WTC11 (cell line): ENCODE measurements at regions of chr3 and their contacts with region 1.

Region 1: GRCh38 chr3:61936344-61936937 is 375.1 kb downstream of the PTPRG start:
- DNase-seq: peak; percentile 70
- ATAC-seq: peak; percentile 72
- H3K4me3 Mint-ChIP-seq: no peak overlapping the region
- H3K27ac Mint-ChIP-seq: no peak overlapping the region
- H3K4me1 Mint-ChIP-seq: peaks cover 68% of the 10 kb centered on the region
- H3K27me3 Mint-ChIP-seq: no peaks in the 10 kb centered on the region
- CTCF ChIP-seq: peak; percentile 84

Region 2: DNA sequence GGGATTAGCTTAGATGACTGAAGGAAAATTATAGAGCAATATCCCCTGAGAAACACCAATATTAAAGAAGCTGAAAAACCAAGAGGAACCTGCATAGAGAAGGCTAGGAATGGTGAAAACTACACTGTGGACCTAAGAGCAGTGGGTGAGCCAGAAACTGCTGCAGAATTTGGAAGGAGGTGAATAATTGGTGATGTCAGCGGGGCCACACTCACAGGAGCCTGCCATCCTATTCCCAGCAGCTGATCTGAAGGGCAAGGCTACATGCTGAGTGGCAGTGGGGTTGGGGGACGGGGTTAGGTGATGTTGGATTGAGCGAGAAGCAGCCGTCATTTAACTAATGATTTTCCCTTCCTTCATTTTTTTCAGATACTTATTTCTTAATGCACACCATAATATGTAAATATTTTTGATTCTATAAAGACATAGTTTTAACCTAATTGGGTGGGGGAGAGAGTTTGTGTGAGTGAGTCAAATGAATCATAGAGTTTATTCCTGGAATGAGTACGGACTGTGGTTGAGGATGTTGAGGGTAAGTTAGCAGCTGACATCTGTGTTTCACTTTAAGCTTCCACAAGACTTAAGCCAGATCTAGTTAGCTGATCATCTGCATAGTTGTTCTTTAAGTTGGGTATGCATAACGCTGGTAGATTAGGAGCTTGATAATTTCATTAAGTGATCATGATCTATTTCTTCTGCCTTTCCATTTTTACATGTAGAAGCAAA is 152.3 kb before region 1 on chr3:
- CTCF ChIA-PET with region 1: no interaction called
- POLR2A ChIA-PET with region 1: no interaction called
- DNase-seq: no peak
- ATAC-seq: peak; percentile 55; the same call in 1 of the 2 replicates
- H3K4me3 Mint-ChIP-seq: no peak overlapping the region
- H3K27ac Mint-ChIP-seq: peak overlapping the region; percentile 49; the same call in 1 of the 2 replicates
- H3K4me1 Mint-ChIP-seq: peaks cover 76% of the 10 kb centered on the region
- H3K27me3 Mint-ChIP-seq: no peaks in the 10 kb centered on the region
- CTCF ChIP-seq: no peak

Region 3: DNA sequence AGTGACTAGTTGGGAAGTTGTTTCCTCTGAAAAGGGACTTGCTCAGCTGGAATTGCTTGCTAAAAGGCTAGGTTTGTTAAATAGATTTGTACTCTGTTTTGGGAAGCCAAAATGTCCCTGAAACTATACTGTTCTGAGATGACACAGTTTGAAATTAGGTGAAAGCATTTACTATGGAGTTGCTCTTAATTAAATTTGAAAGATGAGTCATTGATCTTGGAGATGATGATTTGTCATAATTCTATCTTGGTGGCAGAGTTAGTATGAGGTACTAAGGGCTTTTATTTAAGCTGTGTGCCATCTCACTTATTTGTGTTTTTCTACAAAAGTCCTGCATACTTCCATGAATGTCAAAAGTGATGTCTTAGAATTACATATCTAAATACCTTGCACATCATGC is 54.2 kb before region 1 on chr3:
- CTCF ChIA-PET with region 1: interaction called, 12 read pairs
- POLR2A ChIA-PET with region 1: no interaction called
- DNase-seq: no peak
- ATAC-seq: no peak
- H3K4me3 Mint-ChIP-seq: no peak overlapping the region
- H3K27ac Mint-ChIP-seq: no peak overlapping the region
- H3K4me1 Mint-ChIP-seq: peaks cover 92% of the 10 kb centered on the region
- H3K27me3 Mint-ChIP-seq: no peaks in the 10 kb centered on the region
- CTCF ChIP-seq: no peak

Region 4: DNA sequence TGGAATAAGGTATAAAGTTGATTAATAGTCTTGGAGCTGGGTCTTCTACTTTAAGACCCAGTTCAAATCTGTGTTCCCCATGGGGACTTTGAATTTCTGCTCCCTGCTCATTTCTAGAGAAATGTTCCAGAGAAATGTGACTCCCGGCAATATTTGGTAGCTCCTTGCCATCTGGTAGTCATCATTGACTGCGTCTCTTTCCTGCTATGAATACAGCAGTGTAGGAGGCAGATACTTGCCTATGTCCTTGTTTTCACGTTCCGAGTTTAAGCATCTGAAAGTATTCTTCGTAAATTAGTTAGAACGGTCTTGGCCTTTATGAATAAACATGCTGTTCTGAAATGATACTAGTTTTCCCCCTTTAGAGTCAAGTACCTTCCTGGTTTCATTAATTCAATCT is 22.2 kb before region 1 on chr3:
- CTCF ChIA-PET with region 1: interaction called, 17 read pairs
- POLR2A ChIA-PET with region 1: no interaction called
- DNase-seq: no peak
- ATAC-seq: no peak
- H3K4me3 Mint-ChIP-seq: no peak overlapping the region
- H3K27ac Mint-ChIP-seq: peak overlapping the region; percentile 42
- H3K4me1 Mint-ChIP-seq: peaks cover 90% of the 10 kb centered on the region
- H3K27me3 Mint-ChIP-seq: no peaks in the 10 kb centered on the region
- CTCF ChIP-seq: no peak

Region 5: DNA sequence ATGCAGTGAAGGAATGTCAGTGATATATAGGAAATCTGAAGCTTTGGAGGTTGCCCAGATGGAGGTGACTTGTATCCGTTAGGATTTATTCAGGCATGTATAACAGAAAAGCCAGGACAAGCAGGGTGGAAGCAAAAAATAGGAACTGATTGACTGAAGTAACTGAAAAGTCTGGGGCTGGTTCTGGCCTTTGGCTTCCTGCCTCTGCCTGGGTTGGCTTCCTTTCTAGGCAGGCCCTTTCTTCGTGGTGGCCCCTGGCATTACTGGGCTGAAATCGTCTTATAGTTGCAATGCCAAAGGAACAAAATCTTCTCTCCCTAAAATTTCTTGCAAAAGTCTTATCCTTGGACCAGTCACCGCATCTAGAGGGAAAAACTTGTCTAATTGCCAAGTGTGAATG is 11.0 kb after region 1 on chr3:
- CTCF ChIA-PET with region 1: interaction called, 78 read pairs
- POLR2A ChIA-PET with region 1: no interaction called
- DNase-seq: no peak
- ATAC-seq: no peak
- H3K4me3 Mint-ChIP-seq: 0 out of 2 replicates have a peak overlapping the region, but pooled peaks have one; percentile 3
- H3K27ac Mint-ChIP-seq: peak overlapping the region; percentile 68
- H3K4me1 Mint-ChIP-seq: peaks cover 3% of the 10 kb centered on the region
- H3K27me3 Mint-ChIP-seq: no peaks in the 10 kb centered on the region
- CTCF ChIP-seq: no peak

Region 6: DNA sequence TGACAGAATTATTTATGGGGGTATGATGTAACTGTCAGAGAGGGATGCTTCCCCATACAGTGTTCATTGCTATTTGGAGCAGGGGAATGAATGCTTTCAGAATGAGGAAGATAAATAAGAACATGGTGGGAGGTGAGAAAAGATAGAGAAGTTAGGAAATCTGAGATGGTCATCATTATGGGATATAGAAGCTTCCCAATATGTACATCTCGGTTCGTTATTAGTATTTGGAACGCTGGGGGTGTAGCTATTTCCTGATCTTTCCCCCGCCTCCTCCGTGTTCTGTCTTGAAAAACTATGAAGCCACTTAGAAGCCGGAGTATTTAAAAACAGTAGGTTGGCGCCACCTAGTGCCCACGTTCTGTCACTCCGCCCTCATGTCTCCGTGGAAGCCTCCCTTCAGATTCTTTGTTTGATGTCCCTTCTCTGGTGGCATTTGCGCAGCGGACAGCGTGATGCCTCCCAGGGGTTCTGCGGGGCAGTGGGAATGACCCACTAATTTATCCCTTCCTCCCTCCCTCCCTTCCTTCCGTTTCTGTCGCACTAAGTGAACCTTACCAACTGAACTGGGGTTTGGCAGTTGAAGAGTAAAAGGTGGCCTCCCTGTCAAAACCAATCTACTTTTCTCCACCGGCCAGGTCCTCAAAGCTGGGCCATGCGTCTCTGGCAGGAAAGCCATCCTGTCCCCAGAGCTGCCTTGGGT is 252.4 kb after region 1 on chr3:
- CTCF ChIA-PET with region 1: interaction called, 12 read pairs
- POLR2A ChIA-PET with region 1: no interaction called
- DNase-seq: peak; percentile 75
- ATAC-seq: peak; percentile 58
- H3K4me3 Mint-ChIP-seq: no peak overlapping the region
- H3K27ac Mint-ChIP-seq: no peak overlapping the region
- H3K4me1 Mint-ChIP-seq: peaks cover 27% of the 10 kb centered on the region
- H3K27me3 Mint-ChIP-seq: no peaks in the 10 kb centered on the region; the same call in 1 of the 2 replicates
- CTCF ChIP-seq: peak; percentile 74